ENCODE measurements at regions of chr2 and their contacts with region 1.

Region 1: DNA sequence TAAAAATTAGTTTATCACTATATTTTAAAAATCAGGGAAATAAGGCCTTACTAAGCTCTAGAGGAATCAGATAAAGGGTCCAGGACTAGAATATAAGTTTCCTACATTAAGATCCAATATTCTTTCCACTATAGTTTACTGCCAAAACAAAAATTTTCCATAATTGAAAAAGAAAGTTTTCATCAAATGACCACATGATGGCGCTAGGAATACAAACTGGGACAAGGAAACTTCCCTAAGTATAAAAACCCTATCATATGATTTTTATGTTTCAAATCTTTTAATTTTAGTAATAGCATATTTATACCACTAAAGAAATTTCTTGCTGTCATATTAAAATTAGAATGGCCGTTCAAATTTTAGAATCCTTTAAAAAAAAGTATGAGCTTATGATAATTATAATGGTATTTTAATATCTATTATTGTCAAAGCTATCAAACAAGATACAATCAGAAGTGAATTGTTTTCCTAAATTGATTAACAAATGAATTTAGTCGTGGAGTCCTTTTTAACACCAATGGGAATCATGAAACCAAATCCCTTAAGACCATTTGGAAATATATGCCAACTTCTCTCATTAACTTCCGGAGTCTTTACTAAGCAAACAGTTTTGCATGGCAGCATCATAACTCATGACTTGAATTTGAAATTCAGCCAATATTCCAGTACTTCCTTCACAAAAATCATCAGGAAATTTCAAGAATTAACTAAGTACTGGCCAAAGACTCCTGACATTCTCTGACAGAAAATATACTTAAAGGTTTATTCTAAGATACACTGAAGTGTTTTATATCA is 70.3 kb downstream of the SCN1A start:
- DNase-seq: peak; percentile 85
- H3K4me3 ChIP-seq: peak overlapping the region in 1 of 3 experiments; percentile 32
- H3K27ac ChIP-seq: peak overlapping the region; percentile 51
- H3K4me1 ChIP-seq: peaks cover 18% of the 10 kb centered on the region
- H3K27me3 ChIP-seq: no peaks in the 10 kb centered on the region
- CTCF ChIP-seq: peak; percentile 10 to 25
- POLR2A ChIP-seq: no peak

Region 2: GRCh38 chr2:164464376-164464775 is 1593.2 kb before region 1 on chr2:
- CTCF ChIA-PET with region 1: no interaction called
- POLR2A ChIA-PET with region 1: no interaction called
- dilution Hi-C with region 1: no loop called
- intact Hi-C with region 1: no loop called
- DNase-seq: no peak
- H3K4me3 ChIP-seq: no peak overlapping the region
- H3K27ac ChIP-seq: no peak overlapping the region
- H3K4me1 ChIP-seq: no peaks in the 10 kb centered on the region
- H3K27me3 ChIP-seq: peaks cover 0 to 3% of the 10 kb centered on the region in 2 experiments
- CTCF ChIP-seq: no peak
- POLR2A ChIP-seq: no peak

Region 3: DNA sequence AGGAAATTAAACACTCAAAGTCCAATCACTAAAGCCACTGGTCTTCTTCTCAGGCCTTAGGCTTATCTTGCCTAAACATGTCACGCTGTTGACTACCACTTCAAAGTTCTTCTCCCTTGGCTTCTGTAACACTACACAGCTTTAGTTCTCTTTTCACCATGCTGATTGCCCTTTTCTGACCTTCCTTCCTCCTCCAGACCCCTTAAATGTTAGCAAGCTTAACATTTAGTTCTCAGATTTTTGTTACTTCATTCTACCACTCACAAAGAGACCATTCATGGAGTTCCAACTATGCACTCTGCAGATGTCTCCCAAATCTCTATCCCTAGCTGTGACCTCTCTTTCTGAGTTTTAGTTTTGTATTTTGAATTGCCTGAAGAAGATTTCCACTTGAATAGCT is 168.4 kb before region 1 on chr2:
- CTCF ChIA-PET with region 1: no interaction called
- POLR2A ChIA-PET with region 1: no interaction called
- dilution Hi-C with region 1: no loop called
- intact Hi-C with region 1: no loop called
- DNase-seq: no peak
- H3K4me3 ChIP-seq: no peak overlapping the region
- H3K27ac ChIP-seq: no peak overlapping the region
- H3K4me1 ChIP-seq: no peaks in the 10 kb centered on the region
- H3K27me3 ChIP-seq: no peaks in the 10 kb centered on the region
- CTCF ChIP-seq: no peak
- POLR2A ChIP-seq: no peak

Region 4: GRCh38 chr2:166031054-166031453 is 26.5 kb before region 1 on chr2:
- CTCF ChIA-PET with region 1: no interaction called
- POLR2A ChIA-PET with region 1: no interaction called
- dilution Hi-C with region 1: no loop called
- intact Hi-C with region 1: no loop called
- DNase-seq: no peak
- H3K4me3 ChIP-seq: no peak overlapping the region
- H3K27ac ChIP-seq: no peak overlapping the region
- H3K4me1 ChIP-seq: no peaks in the 10 kb centered on the region
- H3K27me3 ChIP-seq: no peaks in the 10 kb centered on the region
- CTCF ChIP-seq: no peak
- POLR2A ChIP-seq: no peak

Region 5: DNA sequence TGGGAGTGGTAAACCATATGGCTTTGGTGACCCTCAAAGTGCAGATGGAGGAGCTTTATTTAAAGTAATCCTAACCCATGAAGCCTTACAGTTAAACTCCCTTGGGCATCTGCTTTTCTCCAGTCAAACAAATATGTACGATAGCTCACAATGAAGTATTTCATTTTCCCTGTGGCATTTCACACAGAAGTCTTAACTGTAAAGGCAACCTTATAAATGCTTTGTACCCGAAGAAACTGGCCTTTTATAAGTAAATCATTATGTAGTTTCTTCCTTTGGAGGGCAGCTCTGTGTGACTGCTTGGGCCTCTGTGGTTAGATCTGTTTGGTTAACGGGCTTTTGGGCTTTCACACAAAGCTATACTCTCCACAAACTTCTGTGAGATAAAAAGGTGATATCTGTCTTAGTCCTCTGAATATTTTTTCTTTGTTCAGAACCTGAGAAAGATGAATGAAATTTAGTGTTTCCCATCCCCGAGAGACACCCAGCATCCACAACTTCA is 23.6 kb after region 1 on chr2:
- CTCF ChIA-PET with region 1: interaction called, 14 read pairs
- POLR2A ChIA-PET with region 1: no interaction called
- dilution Hi-C with region 1: no loop called
- intact Hi-C with region 1: no loop called
- DNase-seq: no peak
- H3K4me3 ChIP-seq: no peak overlapping the region
- H3K27ac ChIP-seq: no peak overlapping the region
- H3K4me1 ChIP-seq: peaks cover 6% of the 10 kb centered on the region
- H3K27me3 ChIP-seq: no peaks in the 10 kb centered on the region
- CTCF ChIP-seq: no peak
- POLR2A ChIP-seq: no peak

Region 6: GRCh38 chr2:166092889-166093288 is 35.3 kb after region 1 on chr2:
- CTCF ChIA-PET with region 1: interaction called, 18 read pairs
- POLR2A ChIA-PET with region 1: no interaction called
- dilution Hi-C with region 1: no loop called
- intact Hi-C with region 1: loop called (anchors 2 kb)
- DNase-seq: peak; percentile 95
- H3K4me3 ChIP-seq: no peak overlapping the region
- H3K27ac ChIP-seq: peak overlapping the region; percentile 80
- H3K4me1 ChIP-seq: peaks cover 15% of the 10 kb centered on the region
- H3K27me3 ChIP-seq: no peaks in the 10 kb centered on the region
- CTCF ChIP-seq: no peak
- POLR2A ChIP-seq: no peak

Region 7: DNA sequence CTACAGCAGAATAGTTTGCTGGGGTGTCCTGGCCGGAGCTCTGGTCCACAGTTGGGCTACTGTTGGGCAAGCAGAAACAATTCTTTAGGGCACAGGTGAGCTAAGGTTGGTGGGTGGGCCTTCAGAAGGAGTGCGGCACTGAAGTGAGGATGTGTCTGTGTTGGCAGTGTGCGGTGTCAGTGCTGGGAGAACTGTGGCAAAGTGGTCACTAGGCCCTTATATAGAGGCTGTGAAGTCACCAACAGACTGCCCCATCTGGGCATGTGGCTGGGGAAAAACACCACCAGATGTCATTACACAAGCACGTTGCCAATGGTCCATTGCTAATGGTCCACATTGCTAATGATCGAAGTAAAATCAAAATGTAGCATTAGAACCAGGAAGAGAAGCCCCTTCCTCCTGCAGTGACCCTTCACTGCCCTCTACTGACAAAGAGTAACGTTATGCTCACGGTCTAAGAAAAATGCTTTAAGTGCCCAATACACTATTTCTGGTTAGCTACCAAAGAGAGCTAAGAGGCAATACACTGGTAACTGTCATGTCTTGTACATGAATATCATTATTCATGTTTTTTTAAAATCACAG is 49.0 kb after region 1 on chr2:
- CTCF ChIA-PET with region 1: interaction called, 50 read pairs
- POLR2A ChIA-PET with region 1: no interaction called
- dilution Hi-C with region 1: no loop called
- intact Hi-C with region 1: loop called (anchors 1 kb)
- DNase-seq: peak; percentile 68
- H3K4me3 ChIP-seq: no peak overlapping the region
- H3K27ac ChIP-seq: no peak overlapping the region
- H3K4me1 ChIP-seq: no peaks in the 10 kb centered on the region
- H3K27me3 ChIP-seq: no peaks in the 10 kb centered on the region
- CTCF ChIP-seq: peak; percentile 47 to 63
- POLR2A ChIP-seq: no peak

Region 8: DNA sequence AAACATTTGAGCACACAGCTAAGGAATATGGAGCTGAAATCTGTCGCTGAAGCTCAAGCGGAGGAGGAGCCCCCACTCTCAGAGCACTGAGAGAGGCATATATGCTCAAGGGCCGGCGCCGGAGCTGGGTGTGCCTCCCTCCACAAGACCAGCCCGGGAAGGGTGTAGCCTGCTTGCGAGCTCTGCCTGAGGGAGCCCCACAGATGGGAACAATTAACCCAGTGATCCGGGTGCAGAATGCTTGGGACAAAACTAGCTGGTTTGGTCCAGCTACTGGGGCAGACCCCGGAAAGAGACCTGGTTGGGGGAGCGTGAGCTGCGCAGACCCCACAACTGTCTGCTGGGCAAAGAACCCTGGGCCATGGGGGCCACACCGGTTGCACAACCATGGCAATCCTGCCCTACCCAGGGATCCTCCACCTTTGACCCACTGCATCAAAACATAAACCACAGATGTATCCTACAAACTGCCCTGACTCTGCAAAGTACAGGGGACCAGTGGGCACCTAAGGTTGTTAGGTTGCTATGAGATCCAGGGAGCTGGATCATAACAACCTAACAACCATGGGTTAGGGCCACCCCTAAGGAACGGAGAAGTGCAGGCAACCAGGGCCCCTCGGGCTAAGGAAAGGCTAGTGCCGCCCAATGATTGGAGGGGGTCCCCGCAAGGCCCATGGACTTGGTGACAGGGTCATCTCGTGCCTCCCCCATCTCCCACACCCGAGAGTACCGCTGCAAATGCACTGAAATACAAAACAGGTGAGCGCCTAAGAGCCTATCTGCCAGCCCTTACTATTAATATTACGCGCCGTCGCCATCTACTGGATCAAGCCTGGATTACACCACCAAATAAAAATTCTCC is 123.6 kb after region 1 on chr2:
- CTCF ChIA-PET with region 1: interaction called, 15 read pairs
- POLR2A ChIA-PET with region 1: no interaction called
- dilution Hi-C with region 1: no loop called
- intact Hi-C with region 1: loop called (anchors 2 kb)
- DNase-seq: peak; percentile 65
- H3K4me3 ChIP-seq: no peak overlapping the region
- H3K27ac ChIP-seq: no peak overlapping the region
- H3K4me1 ChIP-seq: no peaks in the 10 kb centered on the region
- H3K27me3 ChIP-seq: peaks cover 0 to 1% of the 10 kb centered on the region in 2 experiments
- CTCF ChIP-seq: peak; percentile 42 to 57
- POLR2A ChIP-seq: no peak

Region 9: GRCh38 chr2:166239548-166239947 is 182.0 kb after region 1 on chr2:
- CTCF ChIA-PET with region 1: no interaction called
- POLR2A ChIA-PET with region 1: no interaction called
- dilution Hi-C with region 1: no loop called
- intact Hi-C with region 1: loop called (anchors 10 kb)
- DNase-seq: peak; percentile 92
- H3K4me3 ChIP-seq: no peak overlapping the region
- H3K27ac ChIP-seq: peak overlapping the region; percentile 89
- H3K4me1 ChIP-seq: peaks cover 35% of the 10 kb centered on the region
- H3K27me3 ChIP-seq: no peaks in the 10 kb centered on the region
- CTCF ChIP-seq: no peak
- POLR2A ChIP-seq: peak; percentile 56

Measured in endothelial cell of umbilical vein (primary cell).